ENCODE measurements at regions of chr4 and their contacts with region 1.

Region 1: GRCh38 chr4:138680989-138681604 is 334.5 kb upstream of the NOCT start:
- DNase-seq: peak; percentile 77
- H3K4me3 Mint-ChIP-seq: no peak overlapping the region
- H3K27ac Mint-ChIP-seq: no peak overlapping the region
- H3K4me1 Mint-ChIP-seq: no peaks in the 10 kb centered on the region
- H3K27me3 Mint-ChIP-seq: peaks cover 6% of the 10 kb centered on the region

Region 2: GRCh38 chr4:137735561-137736104 is 945.5 kb before region 1 on chr4:
- CTCF ChIA-PET with region 1: no interaction called
- POLR2A ChIA-PET with region 1: no interaction called
- intact Hi-C with region 1: loop called (anchors 10 kb)
- DNase-seq: no peak
- H3K4me3 Mint-ChIP-seq: no peak overlapping the region
- H3K27ac Mint-ChIP-seq: no peak overlapping the region
- H3K4me1 Mint-ChIP-seq: no peaks in the 10 kb centered on the region
- H3K27me3 Mint-ChIP-seq: no peaks in the 10 kb centered on the region

Region 3: DNA sequence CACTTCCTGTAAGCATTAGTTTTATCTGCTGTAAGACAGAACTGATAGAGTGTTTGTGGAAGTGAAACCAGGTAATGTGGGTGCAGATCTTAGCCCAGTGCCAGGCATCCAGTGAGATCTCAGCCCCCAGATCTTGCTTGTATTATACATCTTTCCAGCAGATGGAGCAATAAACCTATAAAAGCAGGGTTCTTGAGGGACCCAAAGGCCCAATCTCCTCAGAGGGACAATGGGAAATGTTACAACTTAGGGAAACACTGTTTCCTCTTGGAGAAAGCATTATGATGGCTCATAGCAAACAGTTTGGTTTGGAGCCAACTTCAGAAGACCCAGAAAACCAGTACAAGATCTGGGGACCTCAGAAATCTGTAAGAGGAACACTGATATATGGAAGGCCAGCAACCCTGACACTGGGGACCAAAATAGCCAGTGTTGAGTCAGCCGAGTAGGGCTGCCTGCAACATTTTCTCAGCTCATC is 645.3 kb before region 1 on chr4:
- CTCF ChIA-PET with region 1: interaction called, 8 read pairs
- POLR2A ChIA-PET with region 1: no interaction called
- intact Hi-C with region 1: loop called (anchors 1 kb)
- DNase-seq: no peak
- H3K4me3 Mint-ChIP-seq: no peak overlapping the region
- H3K27ac Mint-ChIP-seq: no peak overlapping the region
- H3K4me1 Mint-ChIP-seq: no peaks in the 10 kb centered on the region
- H3K27me3 Mint-ChIP-seq: no peaks in the 10 kb centered on the region

Region 4: DNA sequence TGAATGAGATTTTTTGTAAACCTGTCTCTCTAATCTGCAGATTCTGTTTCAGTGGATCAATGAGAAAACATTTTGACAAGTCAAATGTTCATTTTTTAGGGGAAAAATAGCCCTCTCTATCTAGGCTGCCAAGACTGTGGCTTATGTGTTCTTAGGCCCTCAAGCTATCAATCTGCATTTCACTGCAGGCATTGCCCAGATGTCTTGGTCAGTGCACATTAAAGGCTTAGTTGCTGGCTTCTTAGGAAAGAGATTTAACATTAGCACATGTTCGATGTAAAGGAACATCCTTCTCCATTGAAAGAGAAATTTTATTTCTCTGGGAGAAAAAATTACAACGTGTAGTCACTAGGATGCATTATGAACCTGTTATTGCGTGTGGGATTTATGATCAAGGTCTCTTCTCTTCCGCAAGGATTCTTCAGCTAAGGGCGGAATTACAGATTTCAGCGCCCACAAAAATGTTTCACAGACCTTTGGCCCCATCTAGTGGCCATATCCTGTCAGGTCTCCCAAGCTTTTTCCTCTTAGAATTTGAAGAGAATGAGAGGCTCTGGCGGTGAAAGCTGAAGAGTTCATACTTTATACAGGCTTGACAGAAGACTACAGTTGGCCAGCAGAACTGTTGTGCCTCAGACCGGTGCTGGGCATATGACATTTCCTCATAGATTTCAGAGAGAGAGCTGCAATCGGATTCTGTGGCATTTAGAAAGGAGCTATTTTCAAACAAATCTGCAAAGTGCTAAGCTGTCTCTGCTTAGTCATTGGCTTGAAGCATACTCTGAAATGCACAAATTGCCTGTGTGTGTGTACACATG is 189.8 kb after region 1 on chr4:
- CTCF ChIA-PET with region 1: interaction called, 19 read pairs
- POLR2A ChIA-PET with region 1: no interaction called
- intact Hi-C with region 1: no loop called
- DNase-seq: peak; percentile 61
- H3K4me3 Mint-ChIP-seq: no peak overlapping the region
- H3K27ac Mint-ChIP-seq: no peak overlapping the region
- H3K4me1 Mint-ChIP-seq: no peaks in the 10 kb centered on the region
- H3K27me3 Mint-ChIP-seq: peaks cover 16% of the 10 kb centered on the region

Region 5: GRCh38 chr4:138992676-138993075 is 311.6 kb after region 1 on chr4:
- CTCF ChIA-PET with region 1: no interaction called
- POLR2A ChIA-PET with region 1: no interaction called
- intact Hi-C with region 1: no loop called
- DNase-seq: no peak
- H3K4me3 Mint-ChIP-seq: no peak overlapping the region
- H3K27ac Mint-ChIP-seq: no peak overlapping the region
- H3K4me1 Mint-ChIP-seq: no peaks in the 10 kb centered on the region
- H3K27me3 Mint-ChIP-seq: peaks cover 2% of the 10 kb centered on the region

Region 6: GRCh38 chr4:139083956-139084803 is 403.1 kb after region 1 on chr4:
- CTCF ChIA-PET with region 1: no interaction called
- POLR2A ChIA-PET with region 1: no interaction called
- intact Hi-C with region 1: no loop called
- DNase-seq: peak; percentile 90
- H3K4me3 Mint-ChIP-seq: peak overlapping the region; percentile 98
- H3K27ac Mint-ChIP-seq: peak overlapping the region; percentile 99
- H3K4me1 Mint-ChIP-seq: peaks cover 36% of the 10 kb centered on the region
- H3K27me3 Mint-ChIP-seq: no peaks in the 10 kb centered on the region

Measured in activated CD4-positive, alpha-beta memory T cell treated with anti-CD3 and anti-CD28 coated beads for 36 hours (primary cell).